ENCODE measurements at regions of chr1 and their contacts with region 1.

Region 1: DNA sequence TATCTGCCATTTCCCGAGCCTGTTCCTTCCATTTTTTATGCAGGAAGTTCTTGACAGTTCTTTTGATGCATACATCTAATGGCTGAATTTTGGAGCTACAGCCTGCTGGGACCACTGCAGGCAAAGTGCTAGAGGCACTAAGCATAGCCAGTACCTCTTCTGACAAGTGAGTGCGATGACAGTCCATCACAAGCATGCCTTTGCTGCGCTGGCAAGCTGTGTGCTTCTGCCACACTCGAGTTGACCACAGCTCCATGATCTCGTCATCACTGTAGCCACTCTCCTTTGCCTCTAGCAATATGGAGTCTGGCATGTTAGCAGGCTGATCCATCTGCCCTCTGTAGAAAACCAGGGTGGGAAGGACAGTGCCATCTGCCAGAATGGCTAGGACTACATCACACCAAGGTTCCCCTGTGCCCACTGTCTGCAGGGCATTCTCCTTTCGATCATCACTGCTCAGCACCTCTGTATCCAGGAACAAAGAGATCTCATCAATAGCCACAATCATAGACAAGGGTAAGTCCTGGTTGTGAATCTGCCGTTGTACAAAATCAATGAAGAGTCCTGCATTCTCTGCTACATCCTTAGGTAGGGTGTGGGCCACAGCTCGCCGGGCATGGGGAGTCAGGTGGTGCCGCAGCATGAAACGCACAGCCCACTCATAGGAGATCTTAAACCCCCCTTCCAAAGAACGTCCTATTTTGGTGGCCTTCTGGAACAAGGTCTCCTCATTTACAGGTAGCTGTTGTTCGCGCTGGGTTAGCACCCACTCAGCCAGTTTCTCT is 6.0 kb downstream of the PSMB4 start:
- DNase-seq: no peak
- ATAC-seq: peak in 1 of 4 experiments; percentile 24
- H3K4me3 ChIP-seq: no peak overlapping the region
- H3K4me3 Mint-ChIP-seq: no peak overlapping the region
- H3K27ac ChIP-seq: no peak overlapping the region
- H3K27ac Mint-ChIP-seq: peak overlapping the region in 1 of 2 donors; percentile 41
- H3K4me1 ChIP-seq: peaks cover 6% of the 10 kb centered on the region in 2 experiments
- H3K4me1 Mint-ChIP-seq: peaks cover 16 to 17% (median 17%) of the 10 kb centered on the region in 3 donors
- H3K27me3 ChIP-seq: no peaks in the 10 kb centered on the region
- H3K27me3 Mint-ChIP-seq: no peaks in the 10 kb centered on the region

Region 2: GRCh38 chr1:150808121-150808520 is 597.2 kb before region 1 on chr1 and contains the start of gene CTSK:
- CTCF ChIA-PET with region 1: no interaction called
- POLR2A ChIA-PET with region 1: no interaction called
- DNase-seq: no peak
- ATAC-seq: no peak
- H3K4me3 ChIP-seq: no peak within 1 kb of the TSS
- H3K4me3 Mint-ChIP-seq: peak within 1 kb of the TSS in 2 of 3 donors; percentile 0 to 43
- H3K27ac ChIP-seq: no peak within 1 kb of the TSS
- H3K27ac Mint-ChIP-seq: no peak within 1 kb of the TSS
- H3K4me1 ChIP-seq: peaks cover 0 to 6% of the 10 kb centered on the region in 2 experiments
- H3K4me1 Mint-ChIP-seq: peaks cover 16 to 22% (median 16%) of the 10 kb centered on the region in 3 donors
- H3K27me3 ChIP-seq: no peaks in the 10 kb centered on the region
- H3K27me3 Mint-ChIP-seq: no peaks in the 10 kb centered on the region
- total RNA-seq, gene CTSK: 6.1 to 14.1 (median 7.3) TPM

Region 3: DNA sequence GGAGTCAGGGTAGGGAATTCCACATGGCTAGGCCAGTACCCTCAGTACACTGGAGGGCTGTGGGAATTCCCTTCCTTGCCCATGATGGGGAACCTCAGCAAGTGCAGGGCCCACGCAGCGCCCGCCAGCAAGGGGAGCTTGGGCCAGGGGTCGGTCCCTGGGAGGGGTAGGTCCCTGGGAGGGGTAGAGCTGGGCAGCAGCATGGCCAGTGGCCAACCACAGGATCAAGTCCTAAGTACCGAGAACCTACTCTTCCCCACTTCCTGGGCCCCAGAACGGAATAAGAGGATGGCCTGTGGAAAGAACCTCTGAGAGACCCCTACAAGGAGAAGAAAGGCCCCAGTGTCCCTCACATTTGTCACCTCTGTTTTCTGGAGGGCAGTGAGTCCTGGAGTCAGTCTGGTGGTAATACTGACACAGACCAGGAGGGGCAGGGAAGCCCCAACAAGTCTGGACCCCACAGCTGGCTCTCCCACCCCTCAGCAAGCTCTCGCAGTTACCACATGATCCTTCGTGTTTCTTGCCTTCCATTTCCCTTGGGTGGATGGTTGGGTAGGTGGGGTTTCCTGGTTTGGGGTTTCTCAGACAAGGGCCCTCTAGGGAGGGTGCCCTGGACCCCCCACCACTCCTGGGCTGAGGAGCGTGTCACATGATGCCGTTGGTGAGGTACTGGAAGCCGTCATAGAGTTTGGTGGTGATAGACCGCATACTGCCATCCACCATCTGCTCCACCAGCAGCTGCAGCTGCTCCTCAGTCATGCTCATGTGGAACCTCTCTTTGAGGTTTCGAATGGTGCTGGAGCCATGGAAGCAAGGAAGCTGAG is 112.9 kb before region 1 on chr1:
- CTCF ChIA-PET with region 1: no interaction called
- POLR2A ChIA-PET with region 1: no interaction called
- DNase-seq: peak in 3 of 35 experiments; percentile 15 to 52 (median 17)
- ATAC-seq: peak in 1 of 4 experiments; percentile 44
- H3K4me3 ChIP-seq: no peak overlapping the region
- H3K4me3 Mint-ChIP-seq: no peak overlapping the region
- H3K27ac ChIP-seq: no peak overlapping the region
- H3K27ac Mint-ChIP-seq: peak overlapping the region; percentile 36 to 65
- H3K4me1 ChIP-seq: peaks cover 0 to 22% of the 10 kb centered on the region in 2 experiments
- H3K4me1 Mint-ChIP-seq: peaks cover 6 to 14% (median 12%) of the 10 kb centered on the region in 3 donors
- H3K27me3 ChIP-seq: no peaks in the 10 kb centered on the region
- H3K27me3 Mint-ChIP-seq: no peaks in the 10 kb centered on the region

Region 4: DNA sequence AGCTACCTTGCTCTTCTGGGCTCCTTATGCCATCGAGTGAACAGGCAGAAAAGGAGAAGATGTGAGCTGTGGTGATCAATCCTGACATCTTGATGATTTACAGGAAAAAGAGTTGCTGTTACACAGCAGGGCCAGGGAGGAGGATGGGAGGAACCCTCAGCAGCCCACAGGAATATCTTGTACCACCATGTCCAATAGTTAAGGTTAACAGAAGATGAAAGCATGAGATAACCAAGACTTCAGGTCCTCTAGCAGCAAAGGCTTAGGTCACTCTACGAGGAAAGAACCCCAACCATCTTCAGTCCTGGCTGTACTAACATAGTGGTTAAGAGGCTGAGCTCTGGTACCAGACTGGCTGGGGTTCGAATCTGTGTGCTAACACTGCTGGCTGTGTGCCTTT is 20.8 kb before region 1 on chr1:
- CTCF ChIA-PET with region 1: no interaction called
- POLR2A ChIA-PET with region 1: no interaction called
- DNase-seq: no peak
- ATAC-seq: no peak
- H3K4me3 ChIP-seq: no peak overlapping the region
- H3K4me3 Mint-ChIP-seq: no peak overlapping the region
- H3K27ac ChIP-seq: no peak overlapping the region
- H3K27ac Mint-ChIP-seq: no peak overlapping the region
- H3K4me1 ChIP-seq: no peaks in the 10 kb centered on the region
- H3K4me1 Mint-ChIP-seq: no peaks in the 10 kb centered on the region
- H3K27me3 ChIP-seq: no peaks in the 10 kb centered on the region
- H3K27me3 Mint-ChIP-seq: no peaks in the 10 kb centered on the region

Region 5: DNA sequence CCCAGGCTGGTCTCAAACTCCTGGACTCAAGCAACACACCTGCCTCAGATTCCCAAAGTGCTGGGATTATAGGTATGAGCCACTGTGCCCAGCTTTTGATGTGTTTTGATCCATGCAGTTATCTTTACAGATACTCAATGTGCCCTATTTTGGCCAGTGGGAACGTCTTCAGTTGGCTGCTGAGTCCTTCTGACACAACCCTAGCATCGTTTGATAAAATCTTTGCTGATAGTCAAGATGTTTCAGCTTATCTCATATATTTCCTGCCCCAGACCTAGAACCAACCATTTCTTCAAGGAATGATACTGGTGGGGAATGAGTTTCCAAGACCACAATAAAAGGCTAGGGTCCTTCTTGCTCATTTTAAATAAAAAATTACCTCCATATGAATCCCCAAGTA is 42.3 kb after region 1 on chr1:
- CTCF ChIA-PET with region 1: no interaction called
- POLR2A ChIA-PET with region 1: interaction called, 3 to 10 read pairs
- DNase-seq: no peak
- ATAC-seq: no peak
- H3K4me3 ChIP-seq: no peak overlapping the region
- H3K4me3 Mint-ChIP-seq: no peak overlapping the region
- H3K27ac ChIP-seq: no peak overlapping the region
- H3K27ac Mint-ChIP-seq: no peak overlapping the region
- H3K4me1 ChIP-seq: peaks cover 5 to 6% of the 10 kb centered on the region in 2 experiments
- H3K4me1 Mint-ChIP-seq: peaks cover 36 to 56% (median 44%) of the 10 kb centered on the region in 3 donors
- H3K27me3 ChIP-seq: no peaks in the 10 kb centered on the region
- H3K27me3 Mint-ChIP-seq: no peaks in the 10 kb centered on the region

Region 6: GRCh38 chr1:151574545-151575529 is 169.5 kb after region 1 on chr1:
- CTCF ChIA-PET with region 1: no interaction called
- POLR2A ChIA-PET with region 1: no interaction called
- DNase-seq: no peak
- ATAC-seq: no peak
- H3K4me3 ChIP-seq: no peak overlapping the region
- H3K4me3 Mint-ChIP-seq: no peak overlapping the region
- H3K27ac ChIP-seq: no peak overlapping the region
- H3K27ac Mint-ChIP-seq: no peak overlapping the region
- H3K4me1 ChIP-seq: no peaks in the 10 kb centered on the region
- H3K4me1 Mint-ChIP-seq: no peaks in the 10 kb centered on the region
- H3K27me3 ChIP-seq: no peaks in the 10 kb centered on the region
- H3K27me3 Mint-ChIP-seq: no peaks in the 10 kb centered on the region

Measured in T-cell (primary cell).